ENCODE measurements at regions of chr1 and their contacts with region 1.

Region 1: GRCh38 chr1:15409388-15410222 is at the start of gene EFHD2:
- DNase-seq: peak; percentile 71
- ATAC-seq: peak; percentile 93
- H3K4me3 ChIP-seq: peak within 1 kb of the TSS; percentile 99
- H3K27ac ChIP-seq: peak within 1 kb of the TSS; percentile 54
- H3K4me1 ChIP-seq: peaks cover 25% of the 10 kb centered on the region
- H3K27me3 ChIP-seq: no peaks in the 10 kb centered on the region
- CTCF ChIP-seq: peak; percentile 5; the same call in 1 of the 2 replicates
- POLR2A ChIP-seq: peak; percentile 84
- RAD21 ChIP-seq: no peak
- total RNA-seq, gene EFHD2: 22.6 and 23.1 TPM in 2 replicates

Region 2: DNA sequence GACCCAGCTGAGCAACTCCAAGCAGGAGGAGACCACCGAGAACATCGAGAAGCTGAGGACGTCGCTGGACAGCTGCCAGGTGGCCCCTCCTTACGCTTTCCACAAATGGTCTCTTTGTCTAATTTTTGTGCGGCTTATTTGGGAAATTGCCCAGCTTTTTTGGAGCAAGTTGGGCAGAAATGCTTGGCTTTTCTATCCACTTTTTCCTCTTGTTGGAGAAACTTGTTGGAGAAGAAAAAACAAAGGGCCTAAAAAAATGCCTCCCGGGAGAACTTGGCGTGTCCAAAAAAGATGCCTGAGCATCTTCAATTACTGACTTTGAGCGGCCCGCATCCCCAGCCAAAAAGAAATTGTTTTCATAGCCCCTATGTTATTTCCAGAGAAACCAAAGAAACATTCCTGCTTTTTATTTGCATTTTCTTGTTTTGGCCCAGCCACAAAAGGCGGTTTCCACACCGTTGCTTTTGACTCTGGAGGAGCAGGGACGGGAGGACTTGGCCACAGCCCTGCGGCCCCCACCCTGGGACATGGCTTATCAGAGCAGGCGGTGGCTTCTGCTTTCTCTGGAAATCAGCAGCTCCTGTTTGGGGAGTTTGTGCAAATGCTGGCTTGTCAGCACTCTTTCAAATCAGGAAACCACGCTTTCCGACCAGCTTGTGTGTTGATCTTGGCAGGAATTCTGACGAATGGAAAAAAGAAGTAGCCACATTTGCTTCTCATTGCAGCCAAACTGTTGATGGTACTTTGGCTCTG is 81.1 kb before region 1 on chr1:
- CTCF ChIA-PET with region 1: interaction called, 3 read pairs
- POLR2A ChIA-PET with region 1: no interaction called
- dilution Hi-C with region 1: no loop called
- in situ Hi-C with region 1: no loop called
- intact Hi-C with region 1: loop called (anchors 2 kb)
- DNase-seq: peak; percentile 64
- ATAC-seq: no peak
- H3K4me3 ChIP-seq: no peak overlapping the region
- H3K27ac ChIP-seq: no peak overlapping the region
- H3K4me1 ChIP-seq: peaks cover 8% of the 10 kb centered on the region
- H3K27me3 ChIP-seq: no peaks in the 10 kb centered on the region
- CTCF ChIP-seq: no peak
- POLR2A ChIP-seq: no peak
- RAD21 ChIP-seq: no peak

Region 3: DNA sequence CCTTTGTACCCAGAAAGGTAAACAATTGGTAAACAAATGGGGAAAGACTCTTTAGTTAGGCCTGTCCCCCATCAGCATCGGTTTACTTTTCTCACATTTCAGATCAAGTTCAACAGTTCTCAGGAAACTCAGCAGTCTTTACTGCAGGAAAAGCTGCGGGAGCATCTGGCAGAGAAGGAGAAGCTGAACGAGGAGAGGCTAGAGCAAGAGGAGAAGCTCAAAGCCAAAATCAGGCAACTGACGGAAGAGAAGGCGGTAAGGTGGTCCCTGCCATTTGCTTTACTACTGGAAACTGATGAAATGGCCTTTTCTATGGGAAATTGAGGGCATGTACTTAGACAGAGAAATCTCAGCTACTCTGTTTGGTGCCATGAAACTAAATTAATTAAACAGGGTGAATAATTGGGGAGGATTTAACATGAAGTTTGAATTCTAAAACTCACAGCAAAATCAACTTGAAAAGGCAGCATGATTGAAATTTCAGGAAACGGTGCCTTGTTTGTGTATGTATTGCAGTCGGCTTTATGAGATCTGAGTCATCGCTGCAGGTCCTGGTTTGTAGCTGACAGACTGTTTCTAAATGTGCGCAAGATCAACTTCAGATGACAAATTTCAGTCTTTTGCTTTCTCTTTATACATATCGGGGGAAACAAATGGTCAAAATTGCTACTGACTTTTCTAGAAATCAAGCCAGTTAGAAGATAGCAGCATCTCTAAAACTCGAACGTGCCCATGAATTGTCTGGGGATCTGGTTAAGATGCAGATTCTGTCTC is 67.8 kb before region 1 on chr1:
- CTCF ChIA-PET with region 1: no interaction called
- POLR2A ChIA-PET with region 1: no interaction called
- dilution Hi-C with region 1: no loop called
- in situ Hi-C with region 1: loop called (anchors 5 kb)
- intact Hi-C with region 1: no loop called
- DNase-seq: peak; percentile 85
- ATAC-seq: peak; percentile 61
- H3K4me3 ChIP-seq: no peak overlapping the region
- H3K27ac ChIP-seq: peak overlapping the region; percentile 37; the same call in 1 of the 2 replicates
- H3K4me1 ChIP-seq: peaks cover 12% of the 10 kb centered on the region
- H3K27me3 ChIP-seq: no peaks in the 10 kb centered on the region
- CTCF ChIP-seq: no peak
- POLR2A ChIP-seq: no peak
- RAD21 ChIP-seq: no peak

Region 4: GRCh38 chr1:15454256-15454655 is 44.7 kb after region 1 on chr1:
- CTCF ChIA-PET with region 1: no interaction called
- POLR2A ChIA-PET with region 1: no interaction called
- dilution Hi-C with region 1: no loop called
- in situ Hi-C with region 1: no loop called
- intact Hi-C with region 1: no loop called
- DNase-seq: peak; percentile 87
- ATAC-seq: peak; percentile 79
- H3K4me3 ChIP-seq: no peak overlapping the region
- H3K27ac ChIP-seq: no peak overlapping the region
- H3K4me1 ChIP-seq: 0 out of 2 replicates have a peak, but pooled peaks cover 4% of the 10 kb centered on the region
- H3K27me3 ChIP-seq: no peaks in the 10 kb centered on the region
- CTCF ChIP-seq: no peak
- POLR2A ChIP-seq: no peak
- RAD21 ChIP-seq: no peak

Region 5: DNA sequence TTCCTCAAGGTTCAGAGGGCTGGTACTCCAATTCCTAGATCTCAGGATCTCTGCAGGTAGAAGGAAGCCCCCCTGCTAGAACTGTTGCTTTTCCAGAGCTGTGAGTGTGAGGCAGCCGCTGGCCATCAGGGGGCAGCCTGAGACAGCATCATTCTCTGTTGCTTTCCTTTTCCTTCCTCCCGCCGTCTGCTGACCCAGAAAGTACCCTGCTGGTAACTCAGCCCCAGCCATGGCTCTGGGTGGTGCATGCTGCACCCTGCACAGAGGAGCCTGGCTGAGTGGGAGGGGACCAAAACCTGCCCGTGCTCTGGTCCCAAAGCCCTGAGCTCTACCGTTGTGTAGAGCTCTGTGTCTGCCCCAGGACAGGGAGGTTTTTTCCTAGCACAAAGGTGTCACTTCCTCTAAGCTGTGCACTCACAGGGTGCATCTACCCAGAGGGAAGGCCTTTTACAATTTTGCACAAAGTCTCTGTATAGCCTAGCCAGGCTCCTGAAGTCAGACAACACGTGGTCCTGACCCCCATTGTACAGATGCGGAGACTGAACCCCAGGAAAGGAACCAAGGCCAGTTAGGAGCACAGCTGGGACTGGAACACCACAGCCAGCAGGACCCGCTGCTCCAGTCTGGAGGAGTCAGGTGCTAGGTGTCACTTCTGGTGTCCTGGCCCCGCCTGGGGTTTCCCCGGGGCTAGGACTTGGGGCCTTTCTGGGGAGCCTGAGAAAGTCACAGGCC is 669.5 kb after region 1 on chr1:
- CTCF ChIA-PET with region 1: no interaction called
- POLR2A ChIA-PET with region 1: no interaction called
- dilution Hi-C with region 1: no loop called
- in situ Hi-C with region 1: no loop called
- intact Hi-C with region 1: no loop called
- DNase-seq: peak; percentile 60
- ATAC-seq: peak; percentile 80
- H3K4me3 ChIP-seq: no peak overlapping the region
- H3K27ac ChIP-seq: no peak overlapping the region
- H3K4me1 ChIP-seq: peaks cover 15% of the 10 kb centered on the region
- H3K27me3 ChIP-seq: no peaks in the 10 kb centered on the region
- CTCF ChIP-seq: peak; percentile 89
- POLR2A ChIP-seq: peak; percentile 50; the same call in 1 of the 2 replicates
- RAD21 ChIP-seq: peak; percentile 96

Measured in IMR-90 (cell line).